ENCODE measurements at regions of chr1 and their contacts with region 1.

Region 1: DNA sequence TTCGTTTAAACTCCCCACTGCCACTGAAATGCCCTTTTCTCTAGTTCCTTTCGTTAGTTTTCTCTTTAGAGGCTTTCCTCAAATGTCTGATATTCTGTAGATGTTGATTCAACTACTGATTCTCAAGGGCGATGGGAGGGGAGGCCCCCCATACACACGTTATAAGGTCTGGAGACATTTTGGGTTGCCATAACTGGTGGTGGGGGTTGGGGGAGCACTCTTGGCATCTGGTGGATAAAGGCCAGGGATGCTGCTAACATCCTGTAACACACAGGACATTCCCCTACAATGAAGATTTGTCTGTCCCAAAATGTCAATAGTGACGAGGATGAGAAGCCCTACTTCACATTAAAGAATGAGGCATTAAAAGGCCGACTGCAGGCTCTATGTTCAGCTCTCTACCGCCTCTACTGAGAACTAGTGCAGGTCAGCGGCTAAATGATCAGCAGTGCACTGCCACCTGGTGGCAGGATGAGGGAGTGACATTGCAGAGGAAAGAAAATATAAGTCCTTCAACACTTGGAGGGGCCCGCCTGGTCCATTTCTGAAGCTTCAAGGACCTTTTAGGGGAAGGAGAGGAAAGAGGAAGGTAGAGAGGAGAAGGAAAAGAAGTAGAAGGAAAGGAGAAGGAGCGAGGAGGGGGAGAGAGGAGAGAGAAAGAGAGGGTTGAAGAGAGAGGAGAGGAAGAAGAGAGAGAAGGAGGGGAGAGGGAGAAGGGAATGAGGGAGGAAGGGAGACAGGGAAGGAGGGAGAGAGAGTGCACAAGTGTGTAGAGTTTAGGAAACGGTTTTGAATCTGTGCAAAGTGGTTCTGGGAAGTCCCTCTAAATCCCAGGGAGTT is 29.4 kb downstream of the ALG14 start:
- DNase-seq: peak; percentile 70
- H3K4me3 ChIP-seq: peak overlapping the region in 1 of 2 experiments; percentile 20; a peak in 1 of 4 replicates
- H3K27ac ChIP-seq: no peak overlapping the region; a peak in 1 of 4 replicates
- H3K4me1 ChIP-seq: peaks cover 8 to 9% of the 10 kb centered on the region in 2 experiments; a peak in 3 of 4 replicates
- H3K27me3 ChIP-seq: no peaks in the 10 kb centered on the region
- CTCF ChIP-seq: peak; percentile 99
- EP300 ChIP-seq: no peak
- RAD21 ChIP-seq: peak; percentile 98

Region 2: GRCh38 chr1:94514095-94514727 is 529.1 kb before region 1 on chr1:
- CTCF ChIA-PET with region 1: interaction called, 10 read pairs
- POLR2A ChIA-PET with region 1: no interaction called
- DNase-seq: peak; percentile 20
- H3K4me3 ChIP-seq: no peak overlapping the region; a peak in 1 of 4 replicates
- H3K27ac ChIP-seq: no peak overlapping the region
- H3K4me1 ChIP-seq: no peaks in the 10 kb centered on the region; a peak in 2 of 4 replicates
- H3K27me3 ChIP-seq: no peaks in the 10 kb centered on the region
- CTCF ChIP-seq: peak; percentile 81
- EP300 ChIP-seq: no peak
- RAD21 ChIP-seq: peak; percentile 78

Region 3: DNA sequence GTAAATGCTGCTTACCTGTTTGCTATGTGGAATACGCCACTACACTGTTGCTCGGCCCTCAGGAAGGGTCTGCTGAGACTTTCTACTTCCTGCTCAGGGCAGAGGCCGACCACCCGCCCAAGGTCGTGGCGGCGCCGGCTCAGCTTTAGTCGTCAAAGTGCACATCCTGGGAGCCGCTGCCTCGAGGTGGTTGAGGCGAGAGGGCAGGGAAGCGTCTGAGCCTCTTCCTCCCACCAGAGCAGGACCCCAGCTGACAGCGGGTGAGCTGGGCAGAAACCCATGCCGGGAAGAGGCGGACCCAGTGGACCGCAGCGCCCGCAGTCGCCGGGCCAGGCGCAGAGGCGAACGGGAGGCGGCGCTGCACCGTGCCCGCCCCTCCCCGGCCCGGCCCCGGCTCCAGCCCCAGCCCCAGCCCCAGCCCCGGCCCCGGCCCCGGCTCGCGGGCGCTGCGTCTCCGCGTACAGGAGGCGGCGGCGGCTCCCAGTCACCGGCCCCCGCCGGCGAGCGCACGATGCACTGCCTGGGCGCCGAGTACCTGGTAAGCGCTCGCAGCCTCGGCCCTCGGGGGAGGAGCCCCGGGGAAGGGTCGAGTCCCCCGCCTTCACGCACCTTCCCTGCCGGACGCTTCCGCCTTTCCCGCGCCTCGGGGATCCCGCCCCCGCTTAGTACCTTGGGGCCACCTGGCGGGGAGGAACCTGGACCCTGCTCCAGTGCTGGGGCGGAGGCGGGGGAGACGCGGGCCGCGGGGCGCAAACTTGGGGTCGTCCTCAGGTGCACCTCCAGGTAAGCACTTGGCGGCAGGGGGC is 223.2 kb before region 1 on chr1 and contains the start of gene SLC44A3:
- CTCF ChIA-PET with region 1: interaction called, 19 read pairs
- POLR2A ChIA-PET with region 1: interaction called, 3 read pairs
- DNase-seq: peak; percentile 88
- H3K4me3 ChIP-seq: peak within 1 kb of the TSS; percentile 68 to 72
- H3K27ac ChIP-seq: peak within 1 kb of the TSS in 1 of 2 experiments; percentile 82; a peak in 1 of 4 replicates
- H3K4me1 ChIP-seq: peaks cover 0 to 26% of the 10 kb centered on the region in 2 experiments; a peak in 2 of 4 replicates
- H3K27me3 ChIP-seq: no peaks in the 10 kb centered on the region
- CTCF ChIP-seq: peak; percentile 28; the same call in 1 of the 2 replicates
- EP300 ChIP-seq: no peak
- RAD21 ChIP-seq: no peak
- polyA plus RNA-seq, gene SLC44A3: 2.6 and 4.4 TPM in 2 replicates

Region 4: DNA sequence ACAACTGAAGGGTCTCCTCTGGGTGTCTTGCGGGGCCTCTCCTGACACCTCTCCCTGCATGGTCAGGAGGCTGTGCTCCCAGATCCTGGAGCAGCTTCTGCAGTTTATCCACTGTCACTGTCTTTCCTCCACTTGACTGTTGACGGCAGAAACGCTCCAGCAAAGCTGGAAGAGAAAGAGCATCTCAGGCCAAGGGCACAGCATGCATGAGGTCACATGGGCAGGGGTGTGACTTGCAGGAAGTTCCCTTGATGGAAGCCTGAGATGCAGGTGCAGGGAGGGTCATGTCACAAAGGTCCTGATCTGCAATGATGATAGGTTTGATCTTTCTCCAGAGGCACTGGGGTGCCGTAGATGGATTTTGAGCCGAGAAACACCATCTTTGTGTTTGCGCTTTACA is 199.9 kb before region 1 on chr1:
- CTCF ChIA-PET with region 1: interaction called, 186 read pairs
- POLR2A ChIA-PET with region 1: no interaction called
- DNase-seq: no peak
- H3K4me3 ChIP-seq: no peak overlapping the region
- H3K27ac ChIP-seq: no peak overlapping the region
- H3K4me1 ChIP-seq: peaks cover 0 to 2% of the 10 kb centered on the region in 2 experiments; a peak in 1 of 4 replicates
- H3K27me3 ChIP-seq: no peaks in the 10 kb centered on the region
- CTCF ChIP-seq: no peak
- EP300 ChIP-seq: no peak
- RAD21 ChIP-seq: no peak

Region 5: DNA sequence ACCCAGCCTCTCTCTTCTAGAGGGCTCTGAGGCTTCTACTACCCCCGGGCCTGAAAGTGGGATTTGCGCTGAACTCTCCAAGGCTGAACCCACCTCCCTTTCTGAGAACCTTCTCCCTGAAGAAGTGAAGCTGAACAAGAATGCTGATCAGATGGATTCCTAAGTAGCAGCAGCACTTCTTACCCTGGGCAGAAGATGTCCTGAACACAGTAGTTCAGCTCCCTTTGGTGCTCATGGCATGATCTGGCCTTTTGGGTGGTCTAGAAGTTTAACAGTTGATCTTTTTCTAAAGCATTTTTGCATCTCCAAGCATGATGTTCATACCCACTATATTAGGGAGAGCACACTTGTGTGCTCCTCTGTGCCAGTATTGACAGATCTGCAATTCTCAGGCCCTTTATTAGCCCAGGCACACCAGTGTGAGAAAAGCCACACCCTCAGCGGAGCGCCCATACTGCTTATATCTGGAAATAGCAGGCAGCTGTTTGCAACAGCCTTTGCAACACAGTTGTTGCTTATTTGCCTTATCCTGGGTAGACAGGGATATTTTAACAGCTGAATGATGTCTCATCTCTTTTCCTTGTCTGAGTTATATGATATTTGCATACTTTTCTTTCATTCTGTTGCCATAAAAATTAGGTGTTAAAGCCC is 150.6 kb before region 1 on chr1:
- CTCF ChIA-PET with region 1: interaction called, 10 read pairs
- POLR2A ChIA-PET with region 1: interaction called, 4 read pairs
- DNase-seq: no peak
- H3K4me3 ChIP-seq: no peak overlapping the region
- H3K27ac ChIP-seq: peak overlapping the region in 1 of 2 experiments; percentile 18; a peak in 1 of 4 replicates
- H3K4me1 ChIP-seq: no peaks in the 10 kb centered on the region
- H3K27me3 ChIP-seq: no peaks in the 10 kb centered on the region
- CTCF ChIP-seq: no peak
- EP300 ChIP-seq: no peak
- RAD21 ChIP-seq: no peak

Region 6: GRCh38 chr1:94926915-94927404 is 116.4 kb before region 1 on chr1 and contains the start of gene CNN3:
- CTCF ChIA-PET with region 1: interaction called, 24 read pairs
- POLR2A ChIA-PET with region 1: interaction called, 8 read pairs
- DNase-seq: peak; percentile 98
- H3K4me3 ChIP-seq: peak within 1 kb of the TSS; percentile 96 to 98
- H3K27ac ChIP-seq: peak within 1 kb of the TSS; percentile 97 to 98
- H3K4me1 ChIP-seq: peaks cover 29 to 42% of the 10 kb centered on the region in 2 experiments
- H3K27me3 ChIP-seq: no peaks in the 10 kb centered on the region
- CTCF ChIP-seq: no peak
- EP300 ChIP-seq: no peak
- RAD21 ChIP-seq: no peak; the same call in 1 of the 2 replicates
- polyA plus RNA-seq, gene CNN3: 204 and 242 TPM in 2 replicates

Region 7: GRCh38 chr1:95002540-95003432 is 40.6 kb before region 1 on chr1:
- CTCF ChIA-PET with region 1: interaction called, 17 read pairs
- POLR2A ChIA-PET with region 1: no interaction called
- DNase-seq: peak; percentile 54
- H3K4me3 ChIP-seq: 0 out of 4 replicates have a peak overlapping the region, but pooled peaks of 1 of the 2 experiments have one; percentile 38
- H3K27ac ChIP-seq: peak overlapping the region; percentile 68 to 98
- H3K4me1 ChIP-seq: peaks cover 19 to 33% of the 10 kb centered on the region in 2 experiments
- H3K27me3 ChIP-seq: no peaks in the 10 kb centered on the region
- CTCF ChIP-seq: peak; percentile 8; the same call in 1 of the 2 replicates
- EP300 ChIP-seq: peak; percentile 16 to 86; a peak in 3 of 4 replicates
- RAD21 ChIP-seq: peak; percentile 53

Region 8: DNA sequence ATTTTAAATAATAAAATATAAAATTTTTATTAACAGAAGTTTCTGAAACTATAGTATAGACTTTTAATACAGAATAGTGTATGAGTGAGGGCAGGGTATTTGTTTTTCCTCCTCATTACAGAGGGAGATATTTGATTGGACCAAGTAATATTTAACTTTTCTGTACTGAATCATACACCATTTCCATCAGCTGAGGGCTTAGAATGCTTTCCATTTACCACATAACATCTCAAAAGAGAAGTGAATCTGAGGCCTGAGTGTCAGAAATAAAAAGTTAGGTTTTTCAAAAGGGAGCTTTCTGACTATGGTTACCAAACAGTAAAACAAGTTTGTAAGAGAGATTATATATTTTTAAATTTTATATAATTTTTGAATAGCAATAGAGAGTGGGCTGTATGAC is 103.3 kb after region 1 on chr1:
- CTCF ChIA-PET with region 1: no interaction called
- POLR2A ChIA-PET with region 1: no interaction called
- DNase-seq: no peak
- H3K4me3 ChIP-seq: no peak overlapping the region
- H3K27ac ChIP-seq: no peak overlapping the region
- H3K4me1 ChIP-seq: no peaks in the 10 kb centered on the region
- H3K27me3 ChIP-seq: no peaks in the 10 kb centered on the region
- CTCF ChIP-seq: no peak
- EP300 ChIP-seq: no peak
- RAD21 ChIP-seq: no peak

Region 9: GRCh38 chr1:95364546-95364945 is 321.2 kb after region 1 on chr1:
- CTCF ChIA-PET with region 1: no interaction called
- POLR2A ChIA-PET with region 1: no interaction called
- DNase-seq: no peak
- H3K4me3 ChIP-seq: no peak overlapping the region
- H3K27ac ChIP-seq: no peak overlapping the region
- H3K4me1 ChIP-seq: peaks cover 0 to 2% of the 10 kb centered on the region in 2 experiments; a peak in 1 of 4 replicates
- H3K27me3 ChIP-seq: no peaks in the 10 kb centered on the region
- CTCF ChIP-seq: no peak
- EP300 ChIP-seq: no peak
- RAD21 ChIP-seq: no peak